Psoas muscle (tissue), 8 donors: ENCODE measurements at regions of chr7 and their contacts with region 1.

Region 1: DNA sequence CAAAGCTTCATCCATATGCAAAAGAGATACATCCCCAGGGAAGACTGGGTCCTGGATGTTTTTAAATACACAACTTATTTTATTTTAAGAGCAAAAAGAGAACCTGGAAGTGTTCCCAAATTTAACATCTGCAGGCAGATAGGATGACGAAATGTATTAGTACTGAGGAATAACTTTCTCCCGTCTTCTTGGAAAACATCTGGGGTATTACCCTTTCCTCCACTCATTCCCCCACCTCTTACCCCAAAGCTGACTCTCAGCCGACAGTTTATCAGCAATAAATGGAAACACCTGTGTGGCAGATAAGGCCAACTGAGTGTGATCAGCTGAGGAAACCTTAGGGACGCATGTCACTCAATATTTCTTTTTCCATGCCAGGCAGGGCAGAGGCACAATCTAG is 435.6 kb upstream of the NPVF start:
- DNase-seq: no peak
- ATAC-seq: peak in 2 of 4 donors; percentile 20 to 26
- H3K4me3 ChIP-seq: no peak overlapping the region
- H3K27ac ChIP-seq: peak overlapping the region; percentile 57
- H3K4me1 ChIP-seq: peaks cover 23% of the 10 kb centered on the region
- H3K27me3 ChIP-seq: no peaks in the 10 kb centered on the region
- CTCF ChIP-seq: no peak

Region 2: GRCh38 chr7:24346129-24346528 is 1317.7 kb before region 1 on chr7:
- intact Hi-C with region 1: no loop called
- DNase-seq: no peak
- ATAC-seq: no peak
- H3K4me3 ChIP-seq: no peak overlapping the region
- H3K27ac ChIP-seq: no peak overlapping the region
- H3K4me1 ChIP-seq: no peaks in the 10 kb centered on the region
- H3K27me3 ChIP-seq: no peaks in the 10 kb centered on the region
- CTCF ChIP-seq: no peak

Region 3: GRCh38 chr7:25619963-25620799 is 43.7 kb before region 1 on chr7:
- intact Hi-C with region 1: loop called in 1 of 2 experiments (anchors 5 kb)
- DNase-seq: peak in 1 of 2 donors; percentile 18
- ATAC-seq: peak in 1 of 4 donors; percentile 24
- H3K4me3 ChIP-seq: no peak overlapping the region
- H3K27ac ChIP-seq: no peak overlapping the region
- H3K4me1 ChIP-seq: peaks cover 9% of the 10 kb centered on the region
- H3K27me3 ChIP-seq: no peaks in the 10 kb centered on the region
- CTCF ChIP-seq: no peak